PC-9 (cell line): ENCODE measurements at regions of chr6 and their contacts with region 1.

Region 1: DNA sequence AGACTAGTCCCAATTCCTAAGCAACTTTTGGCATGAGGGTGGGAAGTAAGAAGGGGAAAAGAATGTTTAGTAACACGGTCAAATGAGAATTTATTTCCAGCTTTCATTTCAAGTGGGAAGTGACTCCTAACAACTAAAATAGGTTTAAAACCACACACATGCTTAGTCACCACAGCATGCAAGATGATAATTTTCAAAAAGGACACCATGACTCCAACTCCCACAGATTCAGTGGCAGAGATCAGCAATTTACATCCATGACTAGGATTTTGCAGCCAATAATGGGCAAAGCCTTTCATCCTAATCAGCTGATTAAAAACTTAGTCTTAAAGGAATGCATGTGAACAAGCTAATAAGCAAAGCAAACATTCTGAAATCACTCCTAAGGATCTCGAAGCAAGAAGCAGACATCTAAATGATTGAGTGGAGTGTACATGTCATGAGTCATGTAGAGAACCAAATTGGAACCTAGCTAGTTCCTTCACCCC is 48.1 kb upstream of the GCLC start:
- DNase-seq: peak in 1 of 2 experiments; percentile 54
- H3K4me3 ChIP-seq: no peak overlapping the region
- H3K27ac ChIP-seq: no peak overlapping the region
- H3K4me1 ChIP-seq: 0 out of 2 replicates have a peak, but pooled peaks cover 7% of the 10 kb centered on the region
- H3K27me3 ChIP-seq: no peaks in the 10 kb centered on the region
- CTCF ChIP-seq: no peak

Region 2: DNA sequence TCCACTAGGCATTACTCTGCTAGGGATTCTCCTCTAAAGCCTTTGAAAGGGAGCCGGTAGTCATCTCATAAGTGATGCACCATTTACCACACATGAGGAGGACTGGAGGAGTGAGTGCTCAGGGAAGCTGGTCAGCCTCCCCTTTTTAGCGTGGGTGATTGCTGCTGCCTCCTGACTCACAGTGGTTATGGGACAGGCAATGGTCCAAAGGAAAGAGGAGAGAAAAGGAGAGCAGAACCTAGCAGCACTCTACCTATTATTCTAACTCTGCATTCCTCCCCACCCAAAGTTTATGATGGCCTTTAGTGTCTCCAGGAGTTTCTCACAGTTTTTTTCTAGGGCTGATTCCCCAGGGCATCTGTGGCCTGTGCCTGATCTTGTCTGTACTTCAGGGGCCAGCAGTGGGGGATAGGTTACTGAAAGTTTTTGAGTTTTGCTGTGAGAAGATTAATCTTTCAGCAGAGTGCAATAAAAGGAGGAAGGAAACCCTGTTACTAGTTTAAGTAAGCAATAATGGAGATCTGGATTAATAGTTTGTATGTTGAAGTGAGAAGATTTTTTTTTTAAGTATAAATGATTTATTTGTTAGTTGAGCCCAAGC is 11.8 kb before region 1 on chr6:
- CTCF ChIA-PET with region 1: interaction called, 10 read pairs
- POLR2A ChIA-PET with region 1: no interaction called
- intact Hi-C with region 1: no loop called
- DNase-seq: no peak
- H3K4me3 ChIP-seq: no peak overlapping the region
- H3K27ac ChIP-seq: no peak overlapping the region
- H3K4me1 ChIP-seq: no peaks in the 10 kb centered on the region
- H3K27me3 ChIP-seq: no peaks in the 10 kb centered on the region
- CTCF ChIP-seq: no peak